ENCODE measurements at regions of chr21 and their contacts with region 1.

Region 1: DNA sequence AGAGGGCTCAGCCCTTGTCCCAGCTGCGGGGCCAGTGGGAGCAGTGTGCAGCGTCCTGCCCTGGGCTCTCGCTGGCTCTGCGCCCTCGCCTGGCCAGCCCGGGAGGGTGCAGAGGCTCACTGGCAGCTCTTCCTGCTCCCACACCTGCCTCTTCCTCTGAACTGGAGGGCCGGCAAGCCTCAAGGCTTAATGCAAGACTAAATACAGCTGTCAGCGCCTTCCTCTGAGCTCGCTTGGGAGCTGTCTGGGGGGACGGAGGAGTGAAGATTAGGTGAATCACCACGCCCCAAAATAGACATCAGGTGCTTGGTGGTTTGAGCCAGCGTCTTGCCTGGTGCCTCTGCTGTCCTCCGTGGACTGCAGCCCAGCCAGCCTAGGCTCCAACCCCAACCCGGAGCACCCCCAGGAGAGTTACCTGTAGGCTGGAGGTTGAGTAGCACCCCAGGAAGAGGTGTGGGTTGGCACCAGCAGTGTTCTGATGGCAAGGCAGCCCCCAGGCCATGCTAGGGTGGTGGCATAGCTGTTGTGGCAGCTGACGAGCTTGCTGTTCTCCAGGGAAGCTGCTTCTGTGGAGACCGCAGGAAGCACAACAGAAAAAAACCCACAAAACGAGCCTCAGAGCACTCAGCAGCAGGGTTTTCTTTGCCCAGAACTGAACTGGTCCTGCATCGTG is 36.9 kb downstream of the UMODL1 start:
- DNase-seq: peak; percentile 29 to 79 (median 58)
- ATAC-seq: peak; percentile 72 to 93 (median 90)
- H3K4me3 ChIP-seq: peak overlapping the region in 2 of 12 donors; percentile 26 to 39
- H3K27ac ChIP-seq: peak overlapping the region in 1 of 12 donors; percentile 71
- H3K4me1 ChIP-seq: peaks cover 0 to 18% (median 2%) of the 10 kb centered on the region in 12 donors
- H3K27me3 ChIP-seq: peaks cover 0 to 5% (median 0%) of the 10 kb centered on the region in 9 donors
- CTCF ChIP-seq: peak in 11 of 12 donors; percentile 49 to 77 (median 63)
- POLR2A ChIP-seq: no peak

Region 2: GRCh38 chr21:41953831-41954653 is 154.0 kb before region 1 on chr21 and contains the start of gene C2CD2:
- intact Hi-C with region 1: loop called in 4 of 10 experiments (anchors 10 kb)
- DNase-seq: peak; percentile 69 to 88 (median 80)
- ATAC-seq: peak; percentile 39 to 82 (median 74)
- H3K4me3 ChIP-seq: peak within 1 kb of the TSS; percentile 62 to 97 (median 81)
- H3K27ac ChIP-seq: peak within 1 kb of the TSS; percentile 32 to 82 (median 70)
- H3K4me1 ChIP-seq: peaks cover 11 to 51% (median 36%) of the 10 kb centered on the region in 12 donors
- H3K27me3 ChIP-seq: no peaks in the 10 kb centered on the region
- CTCF ChIP-seq: peak in 1 of 12 donors; percentile 3
- POLR2A ChIP-seq: peak in 1 of 2 donors; percentile 26
- total RNA-seq, gene C2CD2: 3.8 to 13.9 (median 7.8) TPM

Region 3: DNA sequence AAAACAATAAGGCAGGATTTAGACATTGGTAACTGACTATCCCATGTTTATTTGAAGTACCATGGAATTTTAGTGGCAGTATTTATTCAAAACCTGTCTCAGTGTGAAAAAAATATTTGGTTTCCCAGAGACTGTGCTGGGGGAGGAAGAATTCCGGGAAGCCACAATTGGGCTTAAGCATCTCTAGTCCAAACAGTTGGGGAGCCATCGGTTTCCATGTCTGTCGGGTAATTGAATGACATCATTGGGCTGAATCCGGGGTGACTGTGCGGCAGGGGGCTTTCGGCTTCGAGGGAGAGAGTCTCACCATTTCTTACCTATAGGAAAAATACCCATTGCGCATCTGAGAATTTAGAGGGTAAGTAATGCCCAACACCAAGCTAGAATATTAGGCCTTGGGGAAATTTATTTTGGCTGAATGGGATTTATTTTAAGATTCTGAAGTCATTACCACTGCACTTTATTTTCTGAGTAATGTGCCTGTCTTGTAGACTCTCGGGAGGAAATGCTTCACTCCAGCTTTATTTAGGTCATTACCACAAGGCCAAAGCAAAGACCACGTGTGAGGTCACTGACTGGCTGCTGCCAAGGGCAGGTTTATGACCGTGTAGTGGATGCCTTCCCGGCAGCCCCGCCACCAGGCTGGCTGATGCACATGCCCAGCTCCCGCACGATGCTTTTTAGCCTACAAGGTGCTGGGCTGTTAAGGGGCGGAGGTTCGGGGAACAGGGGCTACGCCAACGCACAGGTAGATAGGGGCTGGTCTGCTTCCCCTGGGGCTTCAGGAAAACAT is 60.0 kb before region 1 on chr21:
- intact Hi-C with region 1: loop called in 1 of 10 experiments (anchors 10 kb)
- DNase-seq: peak in 4 of 5 donors; percentile 43 to 74 (median 67)
- ATAC-seq: peak; percentile 76 to 94 (median 90)
- H3K4me3 ChIP-seq: no peak overlapping the region
- H3K27ac ChIP-seq: peak overlapping the region in 5 of 12 donors; percentile 32 to 60 (median 51)
- H3K4me1 ChIP-seq: peaks cover 0 to 18% (median 2%) of the 10 kb centered on the region in 12 donors
- H3K27me3 ChIP-seq: no peaks in the 10 kb centered on the region
- CTCF ChIP-seq: peak in 1 of 12 donors; percentile 27
- POLR2A ChIP-seq: no peak

Region 4: GRCh38 chr21:42062236-42063022 is 45.6 kb before region 1 on chr21:
- intact Hi-C with region 1: no loop called
- DNase-seq: peak in 4 of 5 donors; percentile 7 to 77 (median 46)
- ATAC-seq: peak in 2 of 4 donors; percentile 25 to 39
- H3K4me3 ChIP-seq: peak overlapping the region in 1 of 12 donors; percentile 45
- H3K27ac ChIP-seq: peak overlapping the region in 2 of 12 donors; percentile 13 to 87
- H3K4me1 ChIP-seq: peaks cover 0 to 46% (median 1%) of the 10 kb centered on the region in 12 donors
- H3K27me3 ChIP-seq: peaks cover 0 to 20% (median 0%) of the 10 kb centered on the region in 9 donors
- CTCF ChIP-seq: no peak
- POLR2A ChIP-seq: no peak